ENCODE measurements at regions of chr1 and their contacts with region 1.

Region 1: DNA sequence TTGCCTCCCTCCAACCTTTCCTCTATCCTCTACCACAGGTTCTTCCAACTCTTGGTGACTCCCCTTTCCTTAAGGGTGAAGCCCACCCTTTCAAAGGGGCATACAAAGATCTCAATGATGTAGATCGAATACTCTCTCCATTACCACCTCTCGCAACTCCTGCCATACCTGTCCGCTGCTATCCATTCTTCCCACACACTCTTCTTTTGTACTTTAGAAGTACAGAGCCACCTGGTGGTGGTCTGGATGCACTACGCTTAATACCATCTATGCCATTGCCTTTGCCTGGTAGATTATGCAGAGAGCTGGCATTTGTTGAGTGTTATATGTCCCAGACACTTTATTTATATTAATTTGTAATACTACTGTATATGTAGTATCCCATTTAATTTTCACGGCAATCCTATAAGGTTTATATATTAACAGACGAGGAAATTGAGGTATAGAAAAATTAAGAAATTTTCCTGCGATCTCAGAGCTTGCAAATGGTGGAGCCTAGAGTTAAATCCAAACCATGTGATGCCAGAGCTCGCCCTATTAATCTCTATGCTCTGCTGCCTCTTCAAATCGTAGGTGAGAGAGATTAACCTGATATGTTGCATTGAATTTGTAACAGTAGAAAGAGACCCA is 22.9 kb downstream of the TSHB start:
- DNase-seq: peak in 2 of 3 donors; percentile 31 to 69
- ATAC-seq: peak; percentile 60 to 61
- H3K4me3 ChIP-seq: no peak overlapping the region
- H3K27ac ChIP-seq: no peak overlapping the region
- H3K4me1 ChIP-seq: peaks cover 4% of the 10 kb centered on the region
- H3K27me3 ChIP-seq: no peaks in the 10 kb centered on the region

Region 2: GRCh38 chr1:115099693-115100050 is 47.1 kb after region 1 on chr1:
- intact Hi-C with region 1: loop called in 1 of 4 experiments (anchors 10 kb)
- DNase-seq: no peak
- ATAC-seq: peak in 1 of 2 donors; percentile 11
- H3K4me3 ChIP-seq: no peak overlapping the region
- H3K27ac ChIP-seq: no peak overlapping the region
- H3K4me1 ChIP-seq: no peaks in the 10 kb centered on the region
- H3K27me3 ChIP-seq: no peaks in the 10 kb centered on the region